HEK293T (cell line): ENCODE measurements at regions of chr5 and their contacts with region 1.

Region 1: GRCh38 chr5:158174918-158175851 is 316.2 kb upstream of the CLINT1 start:
- DNase-seq: peak; percentile 77

Region 2: DNA sequence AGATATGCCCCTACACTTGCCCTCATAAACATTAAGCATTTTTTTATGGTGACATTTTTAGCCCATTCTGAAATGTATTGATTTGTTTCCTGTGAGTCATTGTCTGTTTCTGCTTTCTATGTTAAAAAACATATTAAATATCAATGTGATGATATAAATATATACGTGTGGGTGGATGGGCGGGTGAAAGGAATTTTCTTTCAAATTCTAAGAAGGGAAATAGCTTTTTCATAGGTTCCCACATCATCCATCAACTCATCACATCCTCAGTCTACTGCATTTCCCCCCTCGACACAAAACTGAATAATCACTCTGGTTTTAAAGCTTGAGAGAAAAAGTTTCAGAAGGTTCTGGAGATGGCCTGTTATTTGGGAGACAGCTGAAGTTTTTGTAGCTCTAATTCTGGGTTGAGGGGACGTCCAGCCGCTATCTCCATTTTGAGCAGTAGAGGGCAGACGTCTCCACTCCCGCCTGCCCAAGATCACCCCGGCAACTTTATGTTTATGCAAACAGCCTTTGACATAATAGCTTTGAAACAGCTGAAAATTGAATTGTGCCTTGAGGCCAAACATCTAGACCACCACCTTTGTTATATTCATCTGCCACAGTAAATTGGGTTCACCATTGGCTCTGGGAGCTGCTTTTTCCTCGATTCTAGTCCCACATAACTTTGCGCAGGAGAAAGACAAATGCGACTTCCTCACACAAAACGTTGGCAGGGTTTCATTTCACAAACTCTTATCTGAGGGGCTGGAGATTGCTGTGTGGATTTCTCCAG is 100.0 kb before region 1 on chr5:
- CTCF ChIA-PET with region 1: interaction called, 17 read pairs
- POLR2A ChIA-PET with region 1: no interaction called
- DNase-seq: peak; percentile 80

Region 3: DNA sequence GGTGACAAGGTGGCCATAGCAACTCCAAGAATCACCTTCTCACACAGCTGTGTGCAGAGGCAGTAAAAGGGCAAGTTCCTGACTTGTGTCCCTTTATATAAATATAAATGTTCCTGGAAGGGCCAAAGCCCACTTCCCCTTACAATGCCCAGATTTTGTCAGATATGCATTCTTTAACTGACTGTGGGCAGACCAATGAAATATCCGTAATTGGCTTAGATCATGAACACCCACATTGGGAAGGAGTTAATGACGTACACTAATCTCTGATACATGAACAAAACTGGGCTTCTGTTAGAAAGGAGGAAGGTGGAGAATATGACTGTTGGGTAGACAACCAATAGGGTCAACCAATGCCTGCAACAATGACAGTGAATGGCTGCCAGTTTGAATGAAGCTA is 80.9 kb after region 1 on chr5:
- CTCF ChIA-PET with region 1: interaction called, 11 read pairs
- POLR2A ChIA-PET with region 1: no interaction called
- DNase-seq: no peak

Region 4: GRCh38 chr5:159106569-159107282 is 931.5 kb after region 1 on chr5:
- CTCF ChIA-PET with region 1: interaction called, 15 read pairs
- POLR2A ChIA-PET with region 1: no interaction called
- DNase-seq: peak; percentile 80

Region 5: GRCh38 chr5:159133041-159133741 is 958.0 kb after region 1 on chr5:
- CTCF ChIA-PET with region 1: interaction called, 10 read pairs
- POLR2A ChIA-PET with region 1: no interaction called
- DNase-seq: peak; percentile 59